Prostate gland (tissue), 2 donors: ENCODE measurements at regions of chr7 and their contacts with region 1.

Region 1: GRCh38 chr7:123695944-123696677 is 40.4 kb downstream of the LMOD2 start:
- DNase-seq: no peak
- H3K4me3 ChIP-seq: no peak overlapping the region
- H3K27ac ChIP-seq: no peak overlapping the region
- H3K4me1 ChIP-seq: no peaks in the 10 kb centered on the region
- H3K27me3 ChIP-seq: no peaks in the 10 kb centered on the region
- CTCF ChIP-seq: no peak
- POLR2A ChIP-seq: no peak

Region 2: GRCh38 chr7:123494193-123494796 is 201.8 kb before region 1 on chr7:
- intact Hi-C with region 1: loop called (anchors 5 kb)
- DNase-seq: peak; percentile 24
- H3K4me3 ChIP-seq: no peak overlapping the region
- H3K27ac ChIP-seq: no peak overlapping the region
- H3K4me1 ChIP-seq: no peaks in the 10 kb centered on the region
- H3K27me3 ChIP-seq: no peaks in the 10 kb centered on the region
- CTCF ChIP-seq: peak; percentile 49 to 75 (median 60)
- POLR2A ChIP-seq: no peak

Region 3: GRCh38 chr7:124246262-124246863 is 550.3 kb after region 1 on chr7:
- intact Hi-C with region 1: no loop called
- DNase-seq: no peak
- H3K4me3 ChIP-seq: no peak overlapping the region
- H3K27ac ChIP-seq: no peak overlapping the region
- H3K4me1 ChIP-seq: no peaks in the 10 kb centered on the region
- H3K27me3 ChIP-seq: no peaks in the 10 kb centered on the region
- CTCF ChIP-seq: no peak
- POLR2A ChIP-seq: no peak